BJ (cell line): ENCODE measurements at regions of chr7 and their contacts with region 1.

Region 1: DNA sequence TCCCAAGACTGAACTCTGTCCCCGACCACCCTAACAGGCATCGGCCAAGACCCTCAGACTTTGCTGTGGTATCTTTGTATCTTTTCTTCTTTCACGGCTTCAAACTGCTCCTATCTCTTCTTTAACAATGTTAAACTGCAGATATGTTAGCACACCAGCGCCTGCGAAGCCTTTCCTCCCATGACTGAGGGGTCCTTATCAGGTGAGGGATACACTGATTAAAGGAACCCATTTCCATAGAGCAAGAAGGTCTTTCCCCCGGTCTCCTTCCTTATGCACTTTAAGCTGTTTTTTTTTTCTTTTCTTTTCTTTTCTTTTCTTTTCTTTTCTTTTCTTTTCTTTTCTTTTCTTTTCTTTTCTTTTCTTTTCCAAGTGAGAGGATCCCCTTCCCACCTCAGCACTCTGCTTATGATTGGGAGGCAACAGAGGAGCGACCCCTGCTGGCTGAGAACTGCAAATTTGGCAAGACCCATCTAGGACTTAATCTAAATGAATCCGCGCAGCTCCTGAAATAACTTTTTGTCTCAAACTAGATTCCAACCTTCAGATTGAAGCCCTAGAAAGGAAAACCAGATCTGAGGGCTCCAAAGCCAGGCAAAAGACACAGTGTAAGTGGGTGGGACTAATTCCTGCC is 109.9 kb downstream of the ITGB8 start:
- DNase-seq: no peak
- H3K4me3 ChIP-seq: no peak overlapping the region
- H3K27me3 ChIP-seq: no peaks in the 10 kb centered on the region
- CTCF ChIP-seq: peak; percentile 51

Region 2: GRCh38 chr7:20290505-20291111 is 150.0 kb before region 1 on chr7:
- CTCF ChIA-PET with region 1: no interaction called
- POLR2A ChIA-PET with region 1: interaction called, 13 read pairs
- DNase-seq: no peak
- H3K4me3 ChIP-seq: no peak overlapping the region
- H3K27me3 ChIP-seq: no peaks in the 10 kb centered on the region
- CTCF ChIP-seq: no peak

Region 3: GRCh38 chr7:20407585-20408461 is 32.8 kb before region 1 on chr7:
- CTCF ChIA-PET with region 1: interaction called, 13 read pairs
- POLR2A ChIA-PET with region 1: no interaction called
- DNase-seq: peak; percentile 22
- H3K4me3 ChIP-seq: no peak overlapping the region
- H3K27me3 ChIP-seq: no peaks in the 10 kb centered on the region
- CTCF ChIP-seq: no peak